ENCODE measurements at regions of chr1 and their contacts with region 1.

Region 1: DNA sequence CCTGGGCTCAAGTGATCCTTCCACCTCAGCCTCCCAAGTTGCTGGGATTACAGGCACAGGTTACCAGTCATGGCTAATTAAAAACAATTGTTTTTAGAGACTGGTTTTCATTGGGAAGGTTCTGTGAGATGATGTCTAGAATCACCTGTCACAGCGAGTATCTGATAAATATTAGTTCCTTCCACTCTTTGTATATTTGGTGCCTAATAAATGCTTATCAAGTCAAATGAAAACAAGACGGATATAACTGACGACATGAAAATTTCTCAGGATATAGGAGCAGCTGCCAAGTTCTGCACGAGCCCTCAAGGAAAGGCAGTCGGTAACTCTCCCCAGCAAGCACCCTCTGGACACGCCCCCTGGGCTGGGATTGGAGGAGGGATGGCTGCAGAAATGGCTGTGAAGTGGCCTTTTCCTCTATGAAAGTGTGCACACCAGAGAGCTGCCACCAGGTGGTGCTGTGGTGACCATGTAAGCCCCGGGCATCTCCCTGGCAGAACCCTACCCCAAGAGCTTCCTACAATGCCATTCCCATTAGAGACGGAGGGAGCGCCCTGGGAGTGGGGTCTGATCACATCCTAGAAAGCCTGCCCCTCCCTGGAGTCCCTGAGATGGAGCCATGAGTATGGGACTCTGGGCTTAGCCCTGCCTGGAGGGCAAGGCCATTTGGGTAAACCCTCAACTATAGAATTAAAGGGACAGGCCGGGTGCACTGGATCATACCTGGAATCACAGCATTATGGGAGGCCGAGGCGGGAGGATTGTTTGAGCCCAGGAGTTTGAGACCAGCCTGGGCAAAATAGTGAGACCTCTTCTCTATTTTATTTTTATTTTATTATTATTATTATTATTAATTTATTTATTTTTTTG is 50.9 kb downstream of the HTR6 start:
- DNase-seq: peak; percentile 95
- ATAC-seq: peak; percentile 77
- H3K4me3 Mint-ChIP-seq: no peak overlapping the region
- H3K27ac Mint-ChIP-seq: no peak overlapping the region
- H3K4me1 Mint-ChIP-seq: peaks cover 30% of the 10 kb centered on the region
- H3K27me3 Mint-ChIP-seq: no peaks in the 10 kb centered on the region

Region 2: DNA sequence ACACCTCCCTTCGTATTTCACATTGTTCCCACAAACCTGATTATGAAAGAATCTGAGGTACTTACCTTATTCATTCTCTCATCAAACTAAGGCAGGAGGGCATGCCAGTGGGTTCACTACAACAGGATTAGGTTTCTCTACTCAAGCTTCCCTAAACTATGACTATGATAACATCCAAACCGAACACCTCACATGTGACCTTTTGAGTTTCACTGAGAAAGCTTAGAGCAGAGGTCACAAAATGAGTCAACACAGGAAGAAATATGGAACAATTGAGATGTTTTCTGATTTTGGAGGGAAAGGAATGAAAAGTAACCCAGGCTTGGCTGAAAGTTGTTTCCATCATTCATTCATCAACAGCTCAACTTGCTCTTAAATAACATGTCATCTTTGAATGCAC is 529.6 kb before region 1 on chr1:
- CTCF ChIA-PET with region 1: no interaction called
- POLR2A ChIA-PET with region 1: interaction called, 3 read pairs
- intact Hi-C with region 1: loop called in 1 of 2 experiments (anchors 5 kb)
- DNase-seq: peak; percentile 29
- ATAC-seq: peak; percentile 96
- H3K4me3 Mint-ChIP-seq: no peak overlapping the region
- H3K27ac Mint-ChIP-seq: peak overlapping the region; percentile 89
- H3K4me1 Mint-ChIP-seq: peaks cover 37% of the 10 kb centered on the region
- H3K27me3 Mint-ChIP-seq: no peaks in the 10 kb centered on the region

Region 3: GRCh38 chr1:19514391-19514831 is 201.2 kb before region 1 on chr1:
- CTCF ChIA-PET with region 1: no interaction called
- POLR2A ChIA-PET with region 1: no interaction called
- intact Hi-C with region 1: no loop called
- DNase-seq: no peak
- ATAC-seq: no peak
- H3K4me3 Mint-ChIP-seq: no peak overlapping the region
- H3K27ac Mint-ChIP-seq: no peak overlapping the region
- H3K4me1 Mint-ChIP-seq: peaks cover 8% of the 10 kb centered on the region
- H3K27me3 Mint-ChIP-seq: no peaks in the 10 kb centered on the region

Region 4: DNA sequence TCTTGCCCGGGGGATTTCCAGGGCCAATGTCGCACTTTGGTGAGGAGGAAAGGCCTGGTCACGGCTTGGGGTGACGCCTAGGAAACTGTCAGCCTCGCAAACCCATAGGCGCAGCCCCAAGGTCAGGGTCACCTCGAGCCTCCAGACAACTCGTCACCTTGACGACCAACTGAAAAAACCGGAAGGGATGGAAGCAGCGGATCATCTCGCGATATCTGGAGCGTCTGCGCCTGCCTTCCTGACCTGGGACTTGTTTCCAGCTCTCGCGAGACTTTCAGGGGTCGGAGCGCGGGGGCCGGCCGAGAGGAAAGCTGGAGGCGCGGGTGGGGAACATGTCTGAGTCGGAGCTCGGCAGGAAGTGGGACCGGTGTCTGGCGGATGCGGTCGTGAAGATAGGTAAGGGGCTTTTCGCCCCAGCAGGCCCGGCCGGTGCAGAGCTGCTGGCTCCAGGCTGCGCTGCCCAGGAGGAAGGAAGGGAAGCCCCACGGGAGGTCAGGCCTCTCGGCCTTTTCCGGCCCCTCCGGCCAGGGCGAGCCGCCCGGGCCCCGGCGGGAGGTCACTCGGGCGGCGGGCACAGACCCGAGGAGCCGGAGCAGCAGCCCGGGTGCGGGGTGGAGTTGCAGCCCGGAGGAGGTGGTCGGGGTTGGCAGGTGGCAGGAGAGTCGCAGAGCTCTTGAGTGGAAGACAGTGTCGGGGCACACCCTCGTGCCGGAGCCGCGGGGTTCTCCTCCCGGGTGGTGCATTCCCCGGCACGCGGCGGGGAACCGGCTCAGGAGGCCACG is 118.7 kb before region 1 on chr1:
- CTCF ChIA-PET with region 1: no interaction called
- POLR2A ChIA-PET with region 1: no interaction called
- intact Hi-C with region 1: loop called in 1 of 2 experiments (anchors 1 kb)
- DNase-seq: peak; percentile 98
- ATAC-seq: peak; percentile 86
- H3K4me3 Mint-ChIP-seq: peak overlapping the region; percentile 100
- H3K27ac Mint-ChIP-seq: peak overlapping the region; percentile 99
- H3K4me1 Mint-ChIP-seq: peaks cover 44% of the 10 kb centered on the region
- H3K27me3 Mint-ChIP-seq: no peaks in the 10 kb centered on the region

Region 5: DNA sequence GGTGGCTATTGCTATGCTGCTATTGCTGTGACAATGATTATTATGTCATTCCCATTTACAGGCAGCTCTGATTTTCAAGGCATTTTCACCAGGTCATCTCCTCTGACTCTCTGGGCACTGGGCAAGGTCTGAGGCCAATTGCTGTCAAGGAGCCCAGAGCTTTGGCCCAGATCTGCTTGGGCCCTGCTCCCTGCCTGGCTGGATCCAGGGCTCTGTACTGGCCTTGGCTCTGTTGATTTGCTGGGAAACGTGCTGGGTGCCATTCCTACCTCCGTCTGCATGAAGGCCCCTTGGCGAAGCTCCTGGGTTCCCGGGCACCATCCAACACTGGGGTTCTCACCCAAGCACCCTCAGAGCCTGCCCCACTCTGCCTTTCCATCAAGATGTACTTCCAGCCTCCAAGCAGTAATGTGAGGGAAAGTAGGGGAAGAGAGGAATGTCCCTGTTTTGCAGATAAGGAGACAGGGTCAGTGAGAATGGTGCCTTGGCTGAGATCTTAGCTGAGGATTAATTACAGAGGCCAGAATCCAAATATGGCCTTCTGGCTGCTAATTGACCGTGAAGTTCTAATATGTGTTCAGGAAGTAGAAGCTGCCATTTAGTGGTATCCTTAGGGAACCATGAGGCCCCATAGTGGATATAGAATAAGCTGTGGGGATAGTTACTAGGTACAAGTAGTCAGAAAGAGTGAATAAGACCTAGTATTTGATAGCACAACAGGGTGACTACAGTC is 13.0 kb after region 1 on chr1:
- CTCF ChIA-PET with region 1: interaction called, 14 read pairs
- POLR2A ChIA-PET with region 1: no interaction called
- intact Hi-C with region 1: no loop called
- DNase-seq: no peak
- ATAC-seq: no peak
- H3K4me3 Mint-ChIP-seq: no peak overlapping the region
- H3K27ac Mint-ChIP-seq: no peak overlapping the region
- H3K4me1 Mint-ChIP-seq: no peaks in the 10 kb centered on the region
- H3K27me3 Mint-ChIP-seq: no peaks in the 10 kb centered on the region

Region 6: DNA sequence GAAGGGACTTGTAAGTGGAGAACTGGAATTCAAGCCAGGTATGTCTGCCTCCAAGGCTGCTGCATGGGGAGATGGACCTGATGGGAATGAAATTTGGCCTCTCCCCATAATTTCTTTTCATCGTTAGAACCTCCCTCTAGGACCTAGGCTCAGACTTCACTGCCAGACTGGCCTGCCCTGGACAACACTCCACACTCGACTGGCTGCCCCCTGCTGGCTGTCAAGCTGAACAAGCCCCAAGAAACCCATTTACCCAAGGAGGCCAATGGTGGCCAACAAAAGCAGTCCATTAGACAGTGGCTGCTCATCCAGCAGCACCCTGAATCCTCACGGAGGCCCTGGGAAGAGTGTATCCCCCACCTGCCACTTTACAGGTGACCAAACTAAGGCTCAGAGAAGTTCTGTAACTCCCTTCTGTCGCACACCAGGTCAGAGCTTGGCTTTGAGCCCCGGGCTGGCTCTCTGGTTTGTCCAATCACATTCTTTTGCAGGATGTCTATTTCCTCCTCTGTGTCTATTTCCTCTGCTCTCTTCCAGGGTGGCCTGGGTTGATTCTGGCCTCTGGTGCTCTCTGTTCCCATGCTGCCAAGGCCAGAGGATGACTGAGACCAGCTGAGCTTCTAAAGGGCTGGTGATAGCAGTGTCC is 95.8 kb after region 1 on chr1:
- CTCF ChIA-PET with region 1: interaction called, 7 read pairs
- POLR2A ChIA-PET with region 1: no interaction called
- intact Hi-C with region 1: loop called (anchors 1 to 2 kb)
- DNase-seq: peak; percentile 81
- ATAC-seq: peak; percentile 85
- H3K4me3 Mint-ChIP-seq: no peak overlapping the region
- H3K27ac Mint-ChIP-seq: no peak overlapping the region
- H3K4me1 Mint-ChIP-seq: no peaks in the 10 kb centered on the region
- H3K27me3 Mint-ChIP-seq: no peaks in the 10 kb centered on the region

Region 7: GRCh38 chr1:20058531-20058930 is 343.0 kb after region 1 on chr1:
- CTCF ChIA-PET with region 1: no interaction called
- POLR2A ChIA-PET with region 1: no interaction called
- intact Hi-C with region 1: loop called in 1 of 2 experiments (anchors 5 kb)
- DNase-seq: peak; percentile 78
- ATAC-seq: peak; percentile 99
- H3K4me3 Mint-ChIP-seq: no peak overlapping the region
- H3K27ac Mint-ChIP-seq: no peak overlapping the region
- H3K4me1 Mint-ChIP-seq: peaks cover 33% of the 10 kb centered on the region
- H3K27me3 Mint-ChIP-seq: peaks cover 9% of the 10 kb centered on the region

Region 8: GRCh38 chr1:20493839-20494608 is 778.5 kb after region 1 on chr1:
- CTCF ChIA-PET with region 1: no interaction called
- POLR2A ChIA-PET with region 1: no interaction called
- intact Hi-C with region 1: loop called in 1 of 2 experiments (anchors 10 kb)
- DNase-seq: peak; percentile 88
- ATAC-seq: peak; percentile 31
- H3K4me3 Mint-ChIP-seq: no peak overlapping the region
- H3K27ac Mint-ChIP-seq: no peak overlapping the region
- H3K4me1 Mint-ChIP-seq: no peaks in the 10 kb centered on the region
- H3K27me3 Mint-ChIP-seq: peaks cover 10% of the 10 kb centered on the region

Measured in activated CD4-positive, alpha-beta T cell treated with anti-CD3 and anti-CD28 coated beads for 36 hours (primary cell).